Activated CD4-positive, alpha-beta T cell treated with anti-CD3 and anti-CD28 coated beads, Interleukin-2, amount 10 ng/mL, durations not matched to agents 24 days and 14 days (primary cell): ENCODE measurements at regions of chr16 and their contacts with region 1.

Region 1: GRCh38 chr16:69310653-69311532 is at the start of gene VPS4A:
- DNase-seq: peak; percentile 100
- H3K4me3 Mint-ChIP-seq: peak within 1 kb of the TSS; percentile 98
- H3K27ac Mint-ChIP-seq: peak within 1 kb of the TSS; percentile 96
- H3K4me1 Mint-ChIP-seq: peaks cover 20% of the 10 kb centered on the region
- H3K27me3 Mint-ChIP-seq: no peaks in the 10 kb centered on the region
- total RNA-seq, gene VPS4A: 37.7 and 39.7 TPM in 2 replicates

Region 2: GRCh38 chr16:69132424-69133252 is 178.3 kb before region 1 on chr16 and contains the starts of genes CHTF8 and UTP4:
- intact Hi-C with region 1: loop called (anchors 1 kb)
- DNase-seq: peak; percentile 97
- H3K4me3 Mint-ChIP-seq: peak within 1 kb of the TSS; percentile 90
- H3K27ac Mint-ChIP-seq: peak within 1 kb of the TSS; percentile 93
- H3K4me1 Mint-ChIP-seq: peaks cover 50% of the 10 kb centered on the region
- H3K27me3 Mint-ChIP-seq: no peaks in the 10 kb centered on the region
- total RNA-seq, gene CHTF8: 124 and 138 TPM in 2 replicates
- total RNA-seq, gene UTP4: 126 and 131 TPM in 2 replicates

Region 3: DNA sequence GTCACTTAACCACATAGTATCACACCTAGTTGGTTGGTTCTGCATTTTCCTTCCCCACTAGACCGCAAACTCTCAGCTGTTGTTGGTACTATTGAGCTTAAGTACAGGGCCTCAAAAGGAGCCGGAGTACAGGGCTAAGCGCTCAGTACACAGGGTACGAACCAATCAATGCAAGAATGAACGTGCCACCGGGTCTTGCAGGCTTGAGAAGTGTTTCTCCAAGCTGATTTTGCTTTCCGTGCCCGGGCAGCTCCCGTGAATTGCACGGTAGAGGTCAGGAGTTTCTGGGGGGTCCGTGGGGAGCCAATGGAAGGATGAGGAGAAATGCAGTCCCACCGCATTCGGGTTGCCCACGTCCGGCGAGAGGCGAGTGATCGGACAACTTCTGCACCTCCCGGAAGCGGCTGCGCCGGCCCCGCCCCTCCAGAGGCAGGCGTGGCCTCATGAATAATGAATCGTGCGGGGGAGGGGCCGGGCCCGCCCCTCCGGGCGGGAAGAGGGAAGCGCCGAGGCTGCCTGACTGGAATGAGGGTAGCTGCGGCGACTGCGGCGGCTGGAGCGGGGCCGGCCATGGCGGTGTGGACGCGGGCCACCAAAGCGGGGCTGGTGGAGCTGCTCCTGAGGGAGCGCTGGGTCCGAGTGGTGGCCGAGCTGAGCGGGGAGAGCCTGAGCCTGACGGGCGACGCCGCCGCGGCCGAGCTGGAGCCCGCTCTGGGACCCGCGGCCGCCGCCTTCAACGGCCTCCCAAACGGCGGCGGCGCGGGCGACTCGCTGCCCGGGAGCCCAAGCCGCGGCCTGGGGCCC is 124.0 kb before region 1 on chr16 and contains the start of gene SNTB2:
- intact Hi-C with region 1: loop called (anchors 1 kb)
- DNase-seq: peak; percentile 97
- H3K4me3 Mint-ChIP-seq: peak within 1 kb of the TSS; percentile 96
- H3K27ac Mint-ChIP-seq: peak within 1 kb of the TSS; percentile 98
- H3K4me1 Mint-ChIP-seq: peaks cover 47% of the 10 kb centered on the region
- H3K27me3 Mint-ChIP-seq: no peaks in the 10 kb centered on the region
- total RNA-seq, gene SNTB2: 21.4 and 23.3 TPM in 2 replicates

Region 4: GRCh38 chr16:69330286-69331109 is 19.6 kb after region 1 on chr16 and contains the start of gene PDF:
- intact Hi-C with region 1: loop called (anchors 1 kb)
- DNase-seq: peak; percentile 97
- H3K4me3 Mint-ChIP-seq: peak within 1 kb of the TSS; percentile 90
- H3K27ac Mint-ChIP-seq: peak within 1 kb of the TSS; percentile 89
- H3K4me1 Mint-ChIP-seq: peaks cover 32% of the 10 kb centered on the region
- H3K27me3 Mint-ChIP-seq: no peaks in the 10 kb centered on the region
- total RNA-seq, gene PDF: 18.2 and 21.9 TPM in 2 replicates

Region 5: DNA sequence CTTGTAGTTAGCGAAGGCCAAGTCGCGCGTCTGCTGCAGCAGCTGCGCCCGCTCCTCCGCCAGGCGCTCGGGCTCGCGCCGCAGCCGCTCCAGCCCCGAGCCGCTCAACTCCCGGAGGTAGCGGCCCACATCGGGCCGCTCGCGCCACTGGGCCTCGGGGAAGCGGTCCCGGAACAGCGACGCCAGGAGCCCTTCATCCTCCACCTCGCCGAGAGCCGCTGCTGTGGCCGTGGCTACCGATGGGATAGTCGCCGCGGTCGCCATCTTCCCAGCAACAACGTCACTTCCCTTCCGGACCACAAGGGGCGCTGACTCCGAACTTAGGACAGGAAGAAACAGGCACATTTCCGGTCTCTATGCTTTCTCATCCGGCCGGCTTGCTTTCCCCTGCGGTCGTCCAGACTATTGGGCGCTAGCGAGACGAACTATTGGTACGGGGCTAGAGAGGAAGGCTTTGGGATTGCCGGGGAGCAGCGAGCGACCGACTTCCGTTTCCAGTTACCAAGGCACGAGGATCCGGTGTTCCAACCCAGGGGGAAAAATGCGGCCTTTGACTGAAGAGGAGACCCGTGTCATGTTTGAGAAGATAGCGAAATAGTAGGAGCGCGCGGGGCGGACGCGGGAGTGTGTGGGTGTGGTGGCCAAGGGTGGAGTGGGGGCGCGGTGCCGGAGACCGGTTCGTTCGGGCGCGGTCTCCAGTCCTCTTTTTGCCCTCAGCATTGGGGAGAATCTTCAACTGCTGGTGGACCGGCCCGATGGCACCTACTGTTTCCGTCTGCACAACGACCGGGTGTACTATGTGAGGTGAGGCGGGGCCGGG is 28.6 kb after region 1 on chr16 and contains the starts of genes COG8 and NIP7:
- intact Hi-C with region 1: loop called (anchors 1 kb)
- DNase-seq: peak; percentile 98
- H3K4me3 Mint-ChIP-seq: peak within 1 kb of the TSS; percentile 98
- H3K27ac Mint-ChIP-seq: peak within 1 kb of the TSS; percentile 99
- H3K4me1 Mint-ChIP-seq: peaks cover 40% of the 10 kb centered on the region
- H3K27me3 Mint-ChIP-seq: no peaks in the 10 kb centered on the region
- total RNA-seq, gene COG8: 44.1 and 44.6 TPM in 2 replicates
- total RNA-seq, gene NIP7: 81.2 and 84.8 TPM in 2 replicates

Region 6: DNA sequence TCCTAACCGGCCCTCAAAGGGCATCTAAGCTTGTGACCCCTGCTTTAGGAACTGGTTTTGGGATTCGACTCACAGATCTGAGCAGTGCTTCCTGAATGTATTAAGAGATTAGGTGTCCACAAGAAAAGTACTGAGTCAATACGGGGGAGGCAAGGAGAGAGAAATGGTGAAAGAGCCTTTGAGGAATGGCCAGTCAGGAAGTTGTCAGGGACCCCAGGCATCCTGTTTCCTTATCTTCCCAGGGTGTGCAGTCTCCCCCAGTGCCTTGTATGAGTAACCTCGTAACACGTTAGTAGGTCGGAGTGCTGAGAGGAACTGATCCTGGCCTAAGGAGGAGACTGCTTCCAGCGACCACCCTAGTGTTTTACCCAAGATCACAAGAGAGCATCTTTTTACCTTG is 57.1 kb after region 1 on chr16:
- intact Hi-C with region 1: no loop called
- DNase-seq: no peak
- H3K4me3 Mint-ChIP-seq: no peak overlapping the region
- H3K27ac Mint-ChIP-seq: no peak overlapping the region
- H3K4me1 Mint-ChIP-seq: peaks cover 16% of the 10 kb centered on the region
- H3K27me3 Mint-ChIP-seq: no peaks in the 10 kb centered on the region

Region 7: DNA sequence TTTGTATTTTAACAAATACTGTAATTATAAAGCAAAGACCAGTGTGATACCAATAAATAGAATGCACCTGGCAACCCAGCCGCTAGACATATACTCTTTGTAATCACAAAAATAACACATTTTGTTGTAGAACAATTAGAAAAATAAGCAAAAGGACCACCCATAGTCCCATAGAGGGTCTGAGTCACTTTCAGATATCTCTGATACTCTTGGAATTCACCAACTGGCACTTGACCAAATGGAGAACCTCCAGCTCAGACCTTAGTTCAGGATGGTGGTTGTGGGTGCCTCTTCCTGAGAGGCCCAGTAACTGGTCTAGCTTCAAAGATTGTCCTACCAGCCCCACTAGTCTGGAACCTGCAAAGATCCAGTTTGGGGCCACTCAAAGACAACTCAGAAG is 75.7 kb after region 1 on chr16:
- intact Hi-C with region 1: loop called (anchors 1 kb)
- DNase-seq: no peak
- H3K4me3 Mint-ChIP-seq: no peak overlapping the region
- H3K27ac Mint-ChIP-seq: peak overlapping the region; percentile 87
- H3K4me1 Mint-ChIP-seq: peaks cover 21% of the 10 kb centered on the region
- H3K27me3 Mint-ChIP-seq: no peaks in the 10 kb centered on the region

Region 8: DNA sequence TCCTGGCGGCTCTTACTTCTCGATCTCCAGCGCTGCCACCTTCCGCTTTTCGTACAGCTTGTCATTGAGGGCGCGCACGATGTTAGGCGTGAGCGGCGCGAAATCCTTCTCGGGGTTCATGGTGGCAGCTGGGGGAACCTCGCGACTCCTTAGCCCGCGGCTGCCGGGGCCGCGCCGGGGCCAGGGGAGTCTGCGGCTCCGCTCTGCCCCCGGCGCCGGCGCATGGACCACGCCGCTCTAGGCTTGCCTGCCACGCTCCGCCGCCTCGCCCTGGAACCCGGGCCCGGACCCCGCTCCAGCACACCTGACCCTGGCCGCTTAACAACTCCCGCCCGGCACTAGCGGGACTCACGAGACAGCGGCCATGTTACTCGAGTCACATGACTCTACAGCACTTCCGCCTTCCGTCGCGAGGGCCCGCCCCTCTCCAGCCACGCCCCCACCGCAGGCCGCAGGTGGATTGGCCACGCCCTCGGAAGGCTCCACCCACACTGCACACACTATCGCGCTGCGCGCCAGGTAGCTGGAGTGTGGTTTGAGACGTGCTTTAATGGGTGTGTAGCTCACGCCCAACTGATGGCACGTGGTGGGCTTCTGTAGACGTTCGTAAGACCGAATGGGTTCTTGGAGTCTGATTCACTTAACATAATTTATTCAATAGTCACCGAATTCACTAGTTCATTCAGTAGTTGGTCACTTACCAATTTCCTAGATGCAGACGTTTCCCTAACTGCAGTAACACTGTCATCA is 1490.1 kb after region 1 on chr16 and contains the start of gene VAC14:
- intact Hi-C with region 1: no loop called
- DNase-seq: peak; percentile 99
- H3K4me3 Mint-ChIP-seq: peak within 1 kb of the TSS; percentile 96
- H3K27ac Mint-ChIP-seq: peak within 1 kb of the TSS; percentile 93
- H3K4me1 Mint-ChIP-seq: peaks cover 27% of the 10 kb centered on the region
- H3K27me3 Mint-ChIP-seq: no peaks in the 10 kb centered on the region
- total RNA-seq, gene VAC14: 36.3 and 38.6 TPM in 2 replicates